HEK293 (cell line): ENCODE measurements at regions of chr10 and their contacts with region 1.

Region 1: DNA sequence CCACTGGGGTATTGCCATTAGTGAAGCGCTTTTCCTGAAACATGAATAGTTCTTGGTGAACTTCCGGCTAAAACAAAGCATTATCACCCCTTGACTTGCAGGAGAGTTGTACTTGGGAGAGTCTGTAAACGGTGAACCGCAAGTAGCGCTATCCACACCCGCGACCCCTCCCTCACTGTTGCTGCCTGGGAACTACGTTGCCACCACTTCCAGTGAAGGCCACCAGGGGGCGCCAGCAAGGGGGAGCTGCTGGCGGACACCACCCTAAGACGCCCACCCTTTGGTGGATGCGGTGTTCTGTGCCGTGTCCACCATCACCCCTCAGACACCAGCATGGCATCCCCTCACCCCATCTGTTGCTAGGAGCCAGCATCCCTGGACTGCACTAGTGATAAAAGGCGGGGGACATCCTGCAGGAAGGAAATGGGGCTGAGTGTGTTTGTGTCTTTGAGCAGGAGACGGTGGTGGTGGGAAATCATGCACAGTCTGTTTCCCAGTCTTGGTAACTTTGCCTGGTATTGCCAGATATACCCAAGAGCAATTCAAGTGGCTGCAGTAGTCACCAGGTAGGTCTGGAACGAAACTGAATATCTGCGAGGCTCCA is 298.2 kb downstream of the FRMD4A start:
- H3K4me3 ChIP-seq: no peak overlapping the region
- H3K27ac ChIP-seq: no peak overlapping the region
- H3K4me1 ChIP-seq: no peaks in the 10 kb centered on the region
- CTCF ChIP-seq: peak; percentile 69

Region 2: GRCh38 chr10:14009371-14010100 is 23.0 kb before region 1 on chr10:
- CTCF ChIA-PET with region 1: no interaction called
- POLR2A ChIA-PET with region 1: no interaction called
- H3K4me3 ChIP-seq: peak overlapping the region; percentile 30
- H3K27ac ChIP-seq: peak overlapping the region; percentile 44
- H3K4me1 ChIP-seq: peaks cover 9% of the 10 kb centered on the region
- CTCF ChIP-seq: no peak

Region 3: DNA sequence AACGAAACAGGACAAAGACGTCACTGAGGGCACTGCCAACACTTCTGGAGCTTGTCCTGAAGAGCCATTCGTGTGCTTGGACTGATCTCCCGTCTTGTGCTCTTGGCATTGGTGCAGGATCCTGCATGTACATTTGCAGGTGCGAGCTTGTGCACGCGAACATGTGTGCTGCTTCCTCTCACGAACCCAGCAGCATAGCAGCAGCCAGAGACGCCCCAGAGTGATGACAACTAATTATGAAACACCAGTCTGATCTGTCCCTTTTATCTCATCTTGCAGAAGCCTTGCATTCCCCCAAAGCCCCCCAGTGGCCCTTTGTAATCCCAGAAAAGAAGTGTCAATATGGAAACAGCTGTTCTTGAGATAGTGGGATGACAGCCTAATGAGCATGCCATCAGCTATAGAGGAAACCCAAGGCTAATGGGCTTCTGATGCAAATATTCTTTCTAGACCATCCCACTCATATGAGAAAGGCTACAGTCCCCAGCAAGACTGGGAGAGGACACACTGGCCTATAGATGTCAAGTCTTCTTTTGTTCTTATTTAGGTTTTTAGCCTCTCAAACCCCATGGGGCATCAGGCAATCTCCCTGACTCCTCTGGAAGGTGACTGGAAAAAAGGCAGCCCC is 12.3 kb before region 1 on chr10:
- CTCF ChIA-PET with region 1: interaction called, 11 read pairs
- POLR2A ChIA-PET with region 1: no interaction called
- H3K4me3 ChIP-seq: no peak overlapping the region
- H3K27ac ChIP-seq: no peak overlapping the region
- H3K4me1 ChIP-seq: peaks cover 3% of the 10 kb centered on the region; the same call in 1 of the 2 replicates
- CTCF ChIP-seq: no peak

Region 4: GRCh38 chr10:14056610-14057332 is 24.3 kb after region 1 on chr10:
- CTCF ChIA-PET with region 1: interaction called, 10 read pairs
- POLR2A ChIA-PET with region 1: no interaction called
- H3K4me3 ChIP-seq: no peak overlapping the region
- H3K27ac ChIP-seq: no peak overlapping the region
- H3K4me1 ChIP-seq: no peaks in the 10 kb centered on the region
- CTCF ChIP-seq: no peak